ENCODE measurements at regions of chr7 and their contacts with region 1.

Region 1: DNA sequence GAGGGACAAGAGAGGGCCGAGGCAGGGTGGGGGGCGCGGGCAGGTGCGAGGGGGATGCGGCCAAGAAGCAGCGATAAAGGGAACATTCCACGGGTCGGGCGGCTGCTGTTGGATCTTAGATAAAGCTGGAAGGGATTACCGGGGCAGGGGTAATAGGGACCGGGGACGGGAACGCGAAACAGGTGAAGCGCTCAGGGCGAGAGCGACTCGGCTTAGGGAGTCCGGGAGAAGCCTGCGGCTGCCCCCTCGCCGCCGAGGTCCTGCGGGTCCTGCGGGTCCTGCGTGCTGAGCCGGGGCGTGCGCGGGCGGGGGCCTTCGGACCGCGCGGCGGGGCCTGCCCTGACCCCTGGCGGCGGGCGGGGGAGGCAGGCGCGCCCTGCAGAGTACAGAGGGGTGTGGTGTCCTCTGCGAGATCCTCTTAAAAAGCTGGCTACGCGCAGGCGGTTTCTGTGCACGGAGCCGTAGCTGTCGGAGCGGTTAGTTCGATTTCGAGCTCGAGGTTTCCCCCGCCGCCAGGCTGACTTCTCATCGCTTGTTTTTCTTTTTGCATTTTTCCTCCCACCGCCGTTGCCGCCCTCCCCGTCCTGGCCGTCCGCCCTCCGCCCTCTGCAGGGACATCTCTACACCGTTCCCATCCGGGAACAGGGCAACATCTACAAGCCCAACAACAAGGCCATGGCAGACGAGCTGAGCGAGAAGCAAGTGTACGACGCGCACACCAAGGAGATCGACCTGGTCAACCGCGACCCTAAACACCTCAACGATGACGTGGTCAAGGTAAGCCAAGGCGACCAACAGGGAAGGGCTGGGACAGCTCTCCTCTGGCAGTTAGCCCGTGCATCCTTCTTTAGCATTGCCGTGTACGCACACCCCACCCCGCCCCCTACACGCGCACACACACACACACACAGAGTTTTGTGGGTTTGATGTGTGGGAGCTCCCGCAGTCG is 1.4 kb downstream of the CAV1 start:
- DNase-seq: peak; percentile 59 to 73 (median 69)
- ATAC-seq: peak; percentile 90
- H3K4me3 ChIP-seq: peak overlapping the region; percentile 23 to 36
- H3K27ac ChIP-seq: peak overlapping the region in 3 of 4 donors; percentile 35 to 71 (median 61)
- H3K4me1 ChIP-seq: peaks cover 19% of the 10 kb centered on the region
- H3K27me3 ChIP-seq: no peaks in the 10 kb centered on the region
- CTCF ChIP-seq: peak; percentile 49 to 96 (median 88)
- POLR2A ChIP-seq: peak in 2 of 3 donors; percentile 21 to 25

Region 2: DNA sequence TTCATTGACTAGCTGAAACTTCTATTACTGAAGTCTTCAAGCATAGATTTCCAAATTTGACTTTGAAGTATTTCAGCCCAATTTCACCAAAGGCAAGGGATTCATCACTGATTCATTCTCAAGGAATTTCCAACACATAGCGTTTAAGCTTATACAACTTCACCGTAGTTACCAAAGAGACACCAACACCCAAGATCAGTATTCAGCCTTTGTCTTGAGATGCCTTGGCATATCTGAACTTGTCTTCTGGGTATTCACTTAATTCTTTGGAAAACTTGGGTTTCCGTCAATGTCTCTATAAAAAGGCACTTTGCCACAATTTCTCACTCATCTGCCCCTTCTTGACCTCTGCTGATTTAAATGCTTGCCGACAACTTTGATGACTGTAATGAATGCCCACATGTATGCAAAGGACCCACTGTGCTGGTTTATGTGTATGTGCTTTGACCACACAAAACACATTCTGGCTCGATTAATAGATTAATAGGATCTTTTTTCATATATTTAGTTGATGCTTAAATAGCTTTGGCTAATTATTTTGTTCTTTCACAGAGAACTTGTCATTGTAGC is 266.2 kb before region 1 on chr7:
- intact Hi-C with region 1: loop called (anchors 10 kb)
- DNase-seq: no peak
- ATAC-seq: no peak
- H3K4me3 ChIP-seq: no peak overlapping the region
- H3K27ac ChIP-seq: no peak overlapping the region
- H3K4me1 ChIP-seq: no peaks in the 10 kb centered on the region
- H3K27me3 ChIP-seq: no peaks in the 10 kb centered on the region
- CTCF ChIP-seq: no peak
- POLR2A ChIP-seq: no peak

Region 3: DNA sequence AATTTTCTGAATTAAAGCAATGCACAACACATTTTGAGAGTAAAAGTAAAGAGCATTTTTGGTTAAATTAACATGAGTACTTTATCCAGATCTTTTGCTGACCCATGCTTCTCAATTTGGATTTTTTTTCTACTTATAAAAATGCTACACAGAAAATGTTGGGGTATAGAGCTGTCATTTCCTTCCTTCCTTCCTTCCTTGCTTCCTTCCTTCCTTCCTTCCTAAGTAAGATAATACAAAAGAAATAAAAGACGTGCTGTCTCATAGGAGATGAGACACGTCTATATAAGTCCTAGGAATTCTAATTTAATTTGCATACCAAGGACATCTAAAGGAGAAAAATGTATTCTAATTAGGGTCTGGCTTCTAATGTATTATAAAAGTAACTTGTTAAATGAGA is 57.7 kb before region 1 on chr7:
- intact Hi-C with region 1: no loop called
- DNase-seq: no peak
- ATAC-seq: no peak
- H3K4me3 ChIP-seq: no peak overlapping the region
- H3K27ac ChIP-seq: no peak overlapping the region
- H3K4me1 ChIP-seq: no peaks in the 10 kb centered on the region
- H3K27me3 ChIP-seq: no peaks in the 10 kb centered on the region
- CTCF ChIP-seq: no peak
- POLR2A ChIP-seq: no peak

Region 4: GRCh38 chr7:116876664-116877442 is 350.7 kb after region 1 on chr7:
- intact Hi-C with region 1: no loop called
- DNase-seq: peak; percentile 25 to 60 (median 43)
- ATAC-seq: peak; percentile 68
- H3K4me3 ChIP-seq: no peak overlapping the region
- H3K27ac ChIP-seq: peak overlapping the region in 2 of 4 donors; percentile 0 to 45
- H3K4me1 ChIP-seq: peaks cover 35% of the 10 kb centered on the region
- H3K27me3 ChIP-seq: no peaks in the 10 kb centered on the region
- CTCF ChIP-seq: no peak
- POLR2A ChIP-seq: no peak